ENCODE measurements at regions of chr1 and their contacts with region 1.

Region 1: GRCh38 chr1:86156566-86157455 is at the start of gene COL24A1:
- DNase-seq: peak; percentile 81
- total RNA-seq, gene COL24A1: 1.3 TPM

Region 2: GRCh38 chr1:85707990-85708828 is 448.6 kb before region 1 on chr1 and contains the start of gene ZNHIT6:
- intact Hi-C with region 1: no loop called
- DNase-seq: peak; percentile 91
- total RNA-seq, gene ZNHIT6: 13.3 TPM

Region 3: DNA sequence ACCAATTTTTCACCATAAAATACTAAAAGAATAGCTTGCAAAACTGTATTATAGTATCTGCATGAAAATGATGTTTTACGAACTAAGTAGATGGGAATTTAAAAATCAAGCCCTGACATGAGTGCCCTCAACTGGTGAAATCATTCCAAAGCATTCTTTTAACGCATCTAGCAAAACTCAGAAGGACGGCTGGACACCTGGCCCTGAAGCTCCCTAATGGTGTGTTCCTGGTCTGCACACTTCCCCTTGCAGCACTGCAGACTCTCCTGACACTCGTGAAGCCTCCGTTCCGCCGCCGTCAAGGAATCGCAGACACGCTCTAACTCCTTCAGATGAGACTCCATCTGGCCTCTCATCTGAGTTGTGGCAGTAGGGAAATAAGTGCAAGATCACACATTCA is 199.4 kb after region 1 on chr1:
- intact Hi-C with region 1: loop called (anchors 10 kb)
- DNase-seq: no peak

Measured in cardiac septum (tissue), 1 donor.